OCI-LY7 (cell line): ENCODE measurements at regions of chr12 and their contacts with region 1.

Region 1: GRCh38 chr12:47797441-47797840 is 22.3 kb downstream of the HDAC7 start:
- DNase-seq: peak; percentile 83
- H3K4me3 ChIP-seq: no peak overlapping the region
- H3K27ac ChIP-seq: no peak overlapping the region
- H3K4me1 ChIP-seq: peaks cover 10% of the 10 kb centered on the region
- CTCF ChIP-seq: peak; percentile 87

Region 2: DNA sequence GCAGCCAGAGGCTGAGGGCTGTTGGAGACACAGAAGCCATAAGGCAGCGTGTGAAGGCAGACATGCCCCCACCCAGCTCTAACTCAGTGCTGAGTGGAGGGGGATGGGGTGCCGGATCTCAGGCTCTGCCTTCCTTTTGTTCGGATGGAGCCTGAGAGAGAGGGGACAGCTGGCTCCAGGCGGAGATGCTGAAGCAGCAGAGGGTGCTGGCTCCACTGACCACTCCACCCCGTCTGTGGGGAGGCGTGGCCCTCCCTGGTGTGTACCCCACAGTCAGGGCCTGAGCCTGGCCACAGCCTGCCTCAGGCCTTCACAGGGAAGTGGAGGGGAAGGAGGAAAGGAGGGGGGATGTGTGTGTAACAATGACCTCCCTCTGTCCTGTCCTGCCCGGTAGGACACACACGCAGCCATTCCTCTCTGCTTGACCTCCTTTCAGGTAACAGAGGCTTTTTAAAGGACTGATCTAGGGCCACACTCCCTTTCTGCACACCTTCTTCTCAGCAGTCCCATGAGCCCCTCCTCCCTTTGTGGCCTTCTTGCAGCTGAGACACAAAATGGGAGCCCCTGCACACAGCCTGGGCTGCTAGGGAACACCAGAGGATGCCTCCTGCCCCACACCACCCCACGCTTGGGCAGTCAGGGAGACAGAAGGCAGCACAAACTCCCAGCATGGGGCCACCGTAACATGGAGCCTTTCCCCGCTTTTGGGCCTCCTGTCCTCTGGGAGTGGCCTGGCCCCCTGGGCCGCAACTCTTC is 62.5 kb before region 1 on chr12:
- CTCF ChIA-PET with region 1: no interaction called
- POLR2A ChIA-PET with region 1: no interaction called
- intact Hi-C with region 1: no loop called
- DNase-seq: no peak
- H3K4me3 ChIP-seq: no peak overlapping the region
- H3K27ac ChIP-seq: no peak overlapping the region
- H3K4me1 ChIP-seq: peaks cover 9% of the 10 kb centered on the region
- CTCF ChIP-seq: no peak

Region 3: GRCh38 chr12:47819896-47820630 is 22.6 kb after region 1 on chr12 and contains the start of gene HDAC7:
- CTCF ChIA-PET with region 1: interaction called, 10 read pairs
- POLR2A ChIA-PET with region 1: interaction called, 5 read pairs
- intact Hi-C with region 1: loop called (anchors 1 kb)
- DNase-seq: peak; percentile 83
- H3K4me3 ChIP-seq: peak within 1 kb of the TSS; percentile 83
- H3K27ac ChIP-seq: peak within 1 kb of the TSS; percentile 96
- H3K4me1 ChIP-seq: peaks cover 72% of the 10 kb centered on the region
- CTCF ChIP-seq: no peak
- total RNA-seq, gene HDAC7: 38.4 and 45.9 TPM in 2 replicates

Region 4: GRCh38 chr12:47832263-47832933 is 35.0 kb after region 1 on chr12:
- CTCF ChIA-PET with region 1: interaction called, 28 read pairs
- POLR2A ChIA-PET with region 1: interaction called, 17 read pairs
- intact Hi-C with region 1: loop called (anchors 1 kb)
- DNase-seq: peak; percentile 77
- H3K4me3 ChIP-seq: peak overlapping the region; percentile 54
- H3K27ac ChIP-seq: peak overlapping the region; percentile 93
- H3K4me1 ChIP-seq: peaks cover 94% of the 10 kb centered on the region
- CTCF ChIP-seq: no peak

Region 5: DNA sequence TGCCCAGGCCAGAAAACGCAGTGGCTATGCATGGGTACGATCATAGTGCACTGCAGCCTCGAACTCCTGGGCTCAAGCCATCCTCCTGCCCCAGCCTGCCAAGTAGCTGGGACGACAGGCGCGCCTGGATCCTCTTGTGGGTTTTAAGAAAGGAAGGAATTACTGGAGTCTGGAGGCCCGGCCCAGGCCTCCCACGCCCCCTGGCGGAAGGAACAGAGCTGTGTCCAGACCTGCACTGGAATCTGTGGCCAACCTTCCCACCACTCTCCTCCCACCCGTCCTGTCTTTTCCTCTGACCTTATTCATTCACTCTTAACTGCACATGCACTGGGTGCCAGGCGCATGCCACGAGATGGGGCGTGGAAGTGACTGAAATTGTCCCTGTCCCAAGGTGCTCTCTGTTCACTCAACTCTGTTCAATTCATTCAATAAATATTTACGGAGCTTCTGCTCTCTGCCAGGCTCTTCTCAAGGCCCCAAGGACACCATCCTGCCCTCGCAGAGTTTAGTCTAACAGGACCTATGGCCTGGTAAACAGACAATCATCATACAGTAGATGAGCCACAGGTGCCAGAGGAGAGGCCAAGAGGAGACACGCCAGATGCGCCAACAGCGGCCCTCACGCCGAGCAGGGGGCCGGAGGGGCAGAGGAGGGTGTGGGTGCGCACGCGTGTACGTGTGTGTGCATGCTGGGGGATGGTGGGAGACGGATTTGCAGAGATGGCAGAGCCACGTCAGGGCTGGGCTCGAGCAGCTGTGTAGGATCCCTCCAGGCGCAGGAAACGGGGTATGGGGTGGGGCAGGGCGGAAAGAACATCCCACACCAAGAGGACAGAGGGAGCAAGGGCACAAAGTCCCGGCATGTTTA is 152.2 kb after region 1 on chr12:
- CTCF ChIA-PET with region 1: no interaction called
- POLR2A ChIA-PET with region 1: no interaction called
- intact Hi-C with region 1: loop called (anchors 2 kb)
- DNase-seq: peak; percentile 66
- H3K4me3 ChIP-seq: no peak overlapping the region
- H3K27ac ChIP-seq: no peak overlapping the region
- H3K4me1 ChIP-seq: no peaks in the 10 kb centered on the region
- CTCF ChIP-seq: peak; percentile 95